Breast epithelium (tissue), 4 donors: ENCODE measurements at regions of chr4 and their contacts with region 1.

Region 1: DNA sequence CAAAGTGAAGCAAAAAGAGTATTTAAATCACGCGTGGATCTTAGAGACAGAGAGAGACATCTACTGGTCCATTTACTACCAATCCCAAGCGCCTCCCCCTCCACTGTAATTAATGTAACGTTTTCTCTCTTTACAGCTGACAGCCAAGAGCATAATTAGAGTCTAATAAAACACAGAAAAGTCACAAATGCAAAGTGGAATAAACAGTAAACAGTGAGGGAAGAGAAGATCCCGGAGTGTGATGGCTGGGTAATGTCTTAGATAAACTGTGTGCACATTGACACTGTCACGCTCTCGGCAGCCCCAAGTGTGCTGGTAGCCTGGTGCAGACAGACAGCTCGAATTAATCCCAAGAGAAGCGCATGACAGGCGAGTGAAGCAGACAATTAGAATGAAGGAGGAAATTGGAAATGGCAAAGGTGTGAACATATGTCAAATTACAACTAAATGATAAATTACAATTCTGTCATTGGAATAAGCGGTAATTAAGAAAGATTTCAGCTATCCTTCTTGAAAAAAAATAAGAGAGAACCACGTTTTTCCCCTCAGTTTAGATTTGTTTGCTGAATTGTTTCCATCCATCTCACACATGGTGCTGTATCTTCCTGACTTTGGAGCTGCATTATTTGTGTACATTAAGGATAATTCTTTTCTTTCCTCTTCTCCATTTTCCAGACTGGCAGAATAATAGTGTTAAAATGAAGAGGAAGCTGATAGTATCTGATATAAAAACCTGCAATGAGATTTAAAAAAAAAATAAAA is 100.1 kb downstream of the CXXC4 start:
- DNase-seq: no peak
- H3K4me3 ChIP-seq: peak overlapping the region in 1 of 3 donors; percentile 38
- H3K27ac ChIP-seq: no peak overlapping the region
- H3K4me1 ChIP-seq: no peaks in the 10 kb centered on the region
- H3K27me3 ChIP-seq: no peaks in the 10 kb centered on the region
- CTCF ChIP-seq: no peak
- POLR2A ChIP-seq: no peak

Region 2: DNA sequence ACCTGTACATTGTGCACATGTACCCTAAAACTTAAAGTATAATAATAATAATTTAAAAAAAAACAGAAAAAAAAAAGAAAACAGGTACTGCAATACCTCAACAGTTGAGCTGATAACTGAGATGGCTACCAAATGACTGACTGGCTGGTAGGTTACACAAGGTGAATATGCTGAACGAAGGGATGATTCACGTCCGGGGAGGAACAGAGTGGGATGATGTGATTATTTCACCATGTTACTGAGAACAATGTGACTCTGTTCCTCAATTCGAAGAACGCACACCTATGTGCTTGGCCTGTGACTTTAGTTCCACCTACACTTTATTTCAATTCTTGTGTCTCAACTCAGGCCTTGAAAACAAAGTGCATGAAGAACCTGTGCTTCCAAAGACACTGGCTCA is 11.6 kb before region 1 on chr4:
- intact Hi-C with region 1: no loop called
- DNase-seq: no peak
- H3K4me3 ChIP-seq: no peak overlapping the region
- H3K27ac ChIP-seq: no peak overlapping the region
- H3K4me1 ChIP-seq: no peaks in the 10 kb centered on the region
- H3K27me3 ChIP-seq: no peaks in the 10 kb centered on the region
- CTCF ChIP-seq: no peak
- POLR2A ChIP-seq: no peak

Region 3: GRCh38 chr4:104549736-104550135 is 155.1 kb after region 1 on chr4:
- intact Hi-C with region 1: loop called (anchors 5 kb)
- DNase-seq: no peak
- H3K4me3 ChIP-seq: no peak overlapping the region
- H3K27ac ChIP-seq: no peak overlapping the region
- H3K4me1 ChIP-seq: no peaks in the 10 kb centered on the region
- H3K27me3 ChIP-seq: no peaks in the 10 kb centered on the region
- CTCF ChIP-seq: no peak
- POLR2A ChIP-seq: no peak